Activated T-helper 1 cell treated with anti-CD3 and anti-CD28 coated beads, Interleukin-12 subunit alpha, Interleukin-12 subunit beta, Interleukin-2, Interleukin-4 antibody, amounts not matched to agents 30 ng/mL and 10 ng/mL and 1 ng/mL, durations not matched to agents 14 hours and 24 hours and 36 hours (primary cell): ENCODE measurements at regions of chr1 and their contacts with region 1.

Region 1: DNA sequence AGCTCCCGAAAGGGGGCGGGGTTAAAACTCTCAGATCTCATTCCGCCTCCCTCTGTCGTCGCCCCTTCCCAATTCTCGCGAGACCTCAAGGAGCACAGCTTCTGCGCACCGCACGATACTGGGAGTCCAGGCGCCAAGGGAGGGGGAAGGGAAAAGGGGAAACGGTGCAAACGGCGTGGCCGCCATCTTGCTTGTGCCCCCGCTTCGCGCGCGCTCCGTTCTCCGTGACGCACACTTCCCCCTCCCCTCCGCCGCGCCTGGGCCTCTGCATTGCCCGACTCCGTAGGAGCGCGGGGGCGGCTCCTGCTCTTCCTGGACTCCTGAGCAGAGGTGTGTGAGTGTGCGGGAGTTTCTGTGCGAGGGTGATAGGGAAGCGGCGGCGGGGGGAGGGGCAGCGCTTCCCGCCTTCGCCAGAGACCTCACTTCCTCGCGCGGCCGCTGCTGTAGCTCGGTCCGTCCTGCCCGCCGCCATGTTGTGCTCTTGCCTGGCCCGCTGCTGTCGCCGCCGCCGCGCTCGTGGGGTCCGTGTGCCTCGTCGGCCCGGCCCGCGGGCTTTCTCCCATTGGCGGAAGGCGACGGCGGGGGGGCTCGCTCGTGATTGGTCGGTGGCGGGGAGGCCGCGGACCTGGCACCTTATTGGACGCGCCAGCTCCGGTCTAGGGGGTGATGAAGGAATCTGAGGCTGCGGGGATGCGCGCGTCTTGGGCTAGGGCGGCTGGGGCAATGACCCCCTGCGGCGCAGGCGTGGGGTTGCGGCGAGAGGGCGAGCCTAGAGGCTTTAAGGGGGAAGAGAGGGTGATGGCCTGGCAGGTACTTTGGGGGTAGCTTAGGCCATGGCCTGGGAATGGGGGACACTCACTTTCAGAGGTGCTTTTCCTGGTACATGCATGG is at the start of gene NFYC:
- DNase-seq: peak; percentile 96
- H3K4me3 Mint-ChIP-seq: peak within 1 kb of the TSS; percentile 94
- H3K27ac Mint-ChIP-seq: peak within 1 kb of the TSS; percentile 98
- H3K4me1 Mint-ChIP-seq: peaks cover 62% of the 10 kb centered on the region
- H3K27me3 Mint-ChIP-seq: no peaks in the 10 kb centered on the region
- total RNA-seq, gene NFYC: 79.0 and 85.1 TPM in 2 replicates

Region 2: GRCh38 chr1:40373338-40374283 is 318.2 kb before region 1 on chr1 and contains the start of gene SMAP2:
- intact Hi-C with region 1: loop called (anchors 5 kb)
- DNase-seq: peak; percentile 95
- H3K4me3 Mint-ChIP-seq: peak within 1 kb of the TSS; percentile 97
- H3K27ac Mint-ChIP-seq: peak within 1 kb of the TSS; percentile 99
- H3K4me1 Mint-ChIP-seq: peaks cover 59% of the 10 kb centered on the region
- H3K27me3 Mint-ChIP-seq: peaks cover 3% of the 10 kb centered on the region
- total RNA-seq, gene SMAP2: 196 and 201 TPM in 2 replicates

Region 3: GRCh38 chr1:40668769-40669525 is 22.8 kb before region 1 on chr1:
- intact Hi-C with region 1: loop called (anchors 1 kb)
- DNase-seq: peak; percentile 72
- H3K4me3 Mint-ChIP-seq: peak overlapping the region; percentile 59
- H3K27ac Mint-ChIP-seq: no peak overlapping the region
- H3K4me1 Mint-ChIP-seq: peaks cover 9% of the 10 kb centered on the region
- H3K27me3 Mint-ChIP-seq: peaks cover 5% of the 10 kb centered on the region

Region 4: GRCh38 chr1:40742363-40743061 is 50.7 kb after region 1 on chr1:
- intact Hi-C with region 1: loop called (anchors 5 kb)
- DNase-seq: no peak
- H3K4me3 Mint-ChIP-seq: no peak overlapping the region
- H3K27ac Mint-ChIP-seq: peak overlapping the region; percentile 81
- H3K4me1 Mint-ChIP-seq: peaks cover 41% of the 10 kb centered on the region
- H3K27me3 Mint-ChIP-seq: no peaks in the 10 kb centered on the region

Region 5: DNA sequence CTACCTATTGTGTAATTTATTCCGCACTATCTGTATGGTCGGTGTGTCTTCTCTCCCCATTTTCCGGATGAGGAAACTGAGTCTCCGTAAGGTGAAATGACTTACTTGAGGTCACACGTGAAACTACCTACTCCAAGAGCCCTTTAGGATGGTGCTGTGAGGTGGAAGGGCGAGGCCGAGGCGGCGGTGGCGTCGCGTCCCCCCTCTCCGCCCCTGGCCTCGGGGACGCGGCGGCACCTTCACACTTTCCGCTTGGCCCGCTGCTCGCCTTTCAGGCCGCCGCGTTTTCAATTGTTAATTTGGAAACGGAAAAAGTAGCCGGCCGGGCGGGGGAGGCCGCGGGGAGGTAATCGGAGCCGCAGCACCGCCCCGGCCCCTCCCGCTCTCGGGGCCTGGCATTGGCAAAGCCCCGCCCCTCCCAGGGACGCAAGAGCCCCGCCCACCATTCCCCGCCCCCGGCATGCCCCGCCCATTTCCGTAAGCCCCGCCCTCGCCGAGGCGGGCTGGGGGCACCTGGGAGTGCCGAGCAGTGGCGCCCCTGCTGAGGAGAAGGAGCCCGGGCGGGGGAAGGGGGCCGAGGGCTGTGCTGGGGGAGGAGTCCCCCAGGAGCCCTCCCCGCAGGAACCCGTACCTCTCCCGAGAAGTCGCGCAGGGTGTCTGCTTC is 110.4 kb after region 1 on chr1:
- intact Hi-C with region 1: loop called (anchors 2 kb)
- DNase-seq: peak; percentile 80
- H3K4me3 Mint-ChIP-seq: peak overlapping the region; percentile 37
- H3K27ac Mint-ChIP-seq: peak overlapping the region; percentile 34
- H3K4me1 Mint-ChIP-seq: peaks cover 33% of the 10 kb centered on the region
- H3K27me3 Mint-ChIP-seq: peaks cover 2% of the 10 kb centered on the region

Region 6: DNA sequence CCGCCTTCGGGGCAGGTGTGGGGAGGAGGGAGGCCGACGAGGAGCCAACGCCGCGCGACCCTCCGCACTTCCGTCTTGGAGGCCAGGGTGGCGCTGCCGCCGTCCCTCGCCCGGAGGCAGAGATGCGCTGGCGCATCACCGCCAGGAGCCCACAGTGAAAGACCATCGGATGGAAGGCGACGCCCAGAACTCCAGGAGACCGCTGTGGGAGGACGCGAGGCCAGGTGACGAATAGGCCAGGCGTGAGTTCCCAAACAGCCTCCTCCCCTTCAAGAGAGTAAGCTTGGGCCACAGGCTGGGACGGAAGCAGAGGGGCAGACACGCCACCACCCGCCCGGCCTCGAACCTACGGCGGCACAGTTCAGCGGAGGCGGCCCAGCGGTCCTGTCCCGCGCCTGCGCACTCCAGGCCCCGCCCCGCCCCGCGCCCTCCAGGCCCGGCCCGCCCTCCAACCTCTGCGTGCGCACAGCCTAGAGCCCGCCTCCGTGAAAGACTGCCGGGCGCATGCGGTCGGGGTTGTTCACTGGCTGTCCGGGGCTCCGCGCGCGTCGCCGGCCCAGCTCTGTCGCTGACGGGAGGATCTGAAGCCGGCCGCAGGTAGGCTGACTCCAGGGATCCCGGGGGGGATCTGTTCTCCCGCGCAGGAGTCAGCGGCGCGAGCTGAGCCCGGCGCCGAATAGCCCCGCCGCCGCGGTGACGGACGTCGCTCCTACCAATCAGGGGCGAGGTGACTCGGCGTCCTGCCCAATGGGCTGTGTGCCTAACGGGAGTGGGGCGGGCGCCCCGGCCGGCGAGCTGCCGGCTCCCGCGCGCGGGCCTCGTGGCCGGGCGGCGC is 287.7 kb after region 1 on chr1 and contains the start of gene CTPS1:
- intact Hi-C with region 1: loop called (anchors 2 kb)
- DNase-seq: peak; percentile 90
- H3K4me3 Mint-ChIP-seq: peak within 1 kb of the TSS; percentile 90
- H3K27ac Mint-ChIP-seq: peak within 1 kb of the TSS; percentile 97
- H3K4me1 Mint-ChIP-seq: peaks cover 45% of the 10 kb centered on the region
- H3K27me3 Mint-ChIP-seq: no peaks in the 10 kb centered on the region
- total RNA-seq, gene CTPS1: 172 and 174 TPM in 2 replicates

Region 7: GRCh38 chr1:41698916-41699860 is 1007.4 kb after region 1 on chr1:
- intact Hi-C with region 1: no loop called
- DNase-seq: no peak
- H3K4me3 Mint-ChIP-seq: no peak overlapping the region
- H3K27ac Mint-ChIP-seq: no peak overlapping the region
- H3K4me1 Mint-ChIP-seq: peaks cover 15% of the 10 kb centered on the region
- H3K27me3 Mint-ChIP-seq: peaks cover 2% of the 10 kb centered on the region